ENCODE measurements at regions of chr4 and their contacts with region 1.

Region 1: GRCh38 chr4:159446266-159446976 is 343.5 kb downstream of the RAPGEF2 start:
- DNase-seq: no peak
- H3K4me3 ChIP-seq: no peak overlapping the region
- H3K27ac ChIP-seq: peak overlapping the region; percentile 44
- H3K4me1 ChIP-seq: peaks cover 18% of the 10 kb centered on the region
- H3K27me3 ChIP-seq: no peaks in the 10 kb centered on the region
- CTCF ChIP-seq: peak; percentile 97

Region 2: GRCh38 chr4:158729716-158730559 is 716.5 kb before region 1 on chr4:
- intact Hi-C with region 1: loop called (anchors 10 kb)
- DNase-seq: peak; percentile 48
- H3K4me3 ChIP-seq: no peak overlapping the region
- H3K27ac ChIP-seq: no peak overlapping the region
- H3K4me1 ChIP-seq: peaks cover 6% of the 10 kb centered on the region
- H3K27me3 ChIP-seq: no peaks in the 10 kb centered on the region
- CTCF ChIP-seq: peak; percentile 94

Region 3: DNA sequence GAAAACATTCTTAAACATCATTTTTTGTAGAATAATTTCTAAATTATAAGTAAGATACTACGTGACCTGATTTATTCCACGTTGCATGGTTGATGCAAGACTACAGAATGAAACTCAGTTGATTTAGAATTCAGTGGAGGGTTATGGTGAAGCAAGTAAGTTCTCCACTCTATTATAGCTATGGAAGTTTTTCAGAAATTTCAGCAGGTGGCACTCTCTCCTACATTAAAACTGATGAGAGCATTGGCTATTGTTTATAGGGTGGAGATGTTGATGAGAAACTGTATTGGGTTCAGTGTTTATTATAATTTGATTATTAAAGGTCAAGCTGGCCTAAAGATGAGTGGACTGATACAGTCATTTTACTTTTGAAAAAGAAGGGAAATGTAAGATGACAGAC is 589.6 kb before region 1 on chr4:
- intact Hi-C with region 1: loop called (anchors 10 kb)
- DNase-seq: no peak
- H3K4me3 ChIP-seq: no peak overlapping the region
- H3K27ac ChIP-seq: peak overlapping the region; percentile 7
- H3K4me1 ChIP-seq: peaks cover 39% of the 10 kb centered on the region
- H3K27me3 ChIP-seq: no peaks in the 10 kb centered on the region
- CTCF ChIP-seq: peak; percentile 67

Region 4: DNA sequence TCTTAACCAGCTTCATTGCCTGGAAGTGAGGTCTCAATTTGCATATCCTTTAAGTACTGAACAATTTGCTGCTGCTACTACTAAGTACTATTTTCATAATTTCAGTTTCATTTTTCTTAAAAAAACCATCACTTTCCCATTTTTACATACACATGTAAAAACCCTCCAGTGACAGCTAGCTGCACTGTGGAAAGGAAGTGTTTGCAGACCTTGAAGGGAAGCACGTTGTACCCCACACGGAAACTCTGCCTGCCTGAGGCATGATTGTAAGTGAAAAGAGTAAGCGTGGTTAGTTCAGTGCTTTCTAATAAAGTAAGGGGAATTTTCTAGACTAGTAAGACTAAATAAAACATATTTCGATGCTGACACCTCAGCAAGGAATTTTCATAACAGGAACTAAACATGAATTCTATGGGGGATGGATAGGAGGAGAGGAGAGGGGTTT is 240.0 kb before region 1 on chr4:
- intact Hi-C with region 1: loop called (anchors 10 kb)
- DNase-seq: no peak
- H3K4me3 ChIP-seq: no peak overlapping the region
- H3K27ac ChIP-seq: peak overlapping the region; percentile 84
- H3K4me1 ChIP-seq: peaks cover 94% of the 10 kb centered on the region
- H3K27me3 ChIP-seq: no peaks in the 10 kb centered on the region
- CTCF ChIP-seq: no peak

Measured in left ventricle myocardium inferior (tissue), 1 donor.